Kidney (tissue), 22 donors: ENCODE measurements at regions of chr7 and their contacts with region 1.

Region 1: DNA sequence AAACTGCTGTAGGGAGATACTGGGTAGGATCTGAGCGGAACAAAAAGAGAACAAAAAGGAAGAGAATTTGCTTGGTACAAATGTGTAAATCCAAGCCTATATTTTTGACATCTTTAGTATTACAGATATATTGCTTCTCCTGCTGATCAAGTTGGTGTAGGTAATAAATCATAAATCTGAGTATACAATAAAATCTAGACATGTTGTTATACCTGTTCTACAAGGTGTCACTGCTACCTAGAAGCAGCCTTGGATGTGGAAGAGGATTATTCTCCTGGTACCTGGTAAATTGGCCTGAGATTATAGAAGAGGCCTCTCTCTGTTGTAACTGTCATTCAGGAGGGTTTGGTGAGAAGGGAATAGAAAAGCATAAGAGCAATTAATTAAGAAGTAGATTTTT is 89.9 kb upstream of the LSM8 start:
- DNase-seq: no peak
- H3K4me3 ChIP-seq: no peak overlapping the region
- H3K27ac ChIP-seq: no peak overlapping the region
- H3K4me1 ChIP-seq: no peaks in the 10 kb centered on the region
- H3K27me3 ChIP-seq: no peaks in the 10 kb centered on the region
- CTCF ChIP-seq: no peak

Region 2: DNA sequence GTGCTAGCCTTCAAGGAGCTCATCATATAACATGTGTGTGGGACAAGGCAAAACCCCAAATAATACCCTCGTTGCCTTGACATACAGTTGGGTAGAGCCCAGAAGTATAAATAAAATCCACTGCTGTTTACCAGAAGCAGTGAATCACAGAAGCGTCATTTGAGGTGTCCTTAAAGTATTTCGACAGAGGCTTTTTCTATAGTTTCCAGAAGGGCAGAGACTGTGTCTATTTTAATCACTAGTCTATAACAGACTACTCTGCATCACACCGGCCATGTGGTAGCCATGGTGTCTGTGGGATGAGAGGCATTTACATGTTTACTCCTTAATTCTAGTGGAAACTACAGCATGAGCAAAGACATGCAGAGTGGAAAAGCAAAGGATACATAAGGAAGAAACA is 352.1 kb before region 1 on chr7:
- intact Hi-C with region 1: loop called (anchors 10 kb)
- DNase-seq: no peak
- H3K4me3 ChIP-seq: no peak overlapping the region
- H3K27ac ChIP-seq: no peak overlapping the region
- H3K4me1 ChIP-seq: peaks cover 0 to 8% (median 0%) of the 10 kb centered on the region in 3 donors
- H3K27me3 ChIP-seq: no peaks in the 10 kb centered on the region
- CTCF ChIP-seq: no peak